BJ (cell line): ENCODE measurements at regions of chr11 and their contacts with region 1.

Region 1: GRCh38 chr11:46048198-46048597 is 73.1 kb downstream of the PHF21A start:
- DNase-seq: no peak
- H3K4me3 ChIP-seq: no peak overlapping the region
- H3K27me3 ChIP-seq: no peaks in the 10 kb centered on the region
- CTCF ChIP-seq: no peak

Region 2: DNA sequence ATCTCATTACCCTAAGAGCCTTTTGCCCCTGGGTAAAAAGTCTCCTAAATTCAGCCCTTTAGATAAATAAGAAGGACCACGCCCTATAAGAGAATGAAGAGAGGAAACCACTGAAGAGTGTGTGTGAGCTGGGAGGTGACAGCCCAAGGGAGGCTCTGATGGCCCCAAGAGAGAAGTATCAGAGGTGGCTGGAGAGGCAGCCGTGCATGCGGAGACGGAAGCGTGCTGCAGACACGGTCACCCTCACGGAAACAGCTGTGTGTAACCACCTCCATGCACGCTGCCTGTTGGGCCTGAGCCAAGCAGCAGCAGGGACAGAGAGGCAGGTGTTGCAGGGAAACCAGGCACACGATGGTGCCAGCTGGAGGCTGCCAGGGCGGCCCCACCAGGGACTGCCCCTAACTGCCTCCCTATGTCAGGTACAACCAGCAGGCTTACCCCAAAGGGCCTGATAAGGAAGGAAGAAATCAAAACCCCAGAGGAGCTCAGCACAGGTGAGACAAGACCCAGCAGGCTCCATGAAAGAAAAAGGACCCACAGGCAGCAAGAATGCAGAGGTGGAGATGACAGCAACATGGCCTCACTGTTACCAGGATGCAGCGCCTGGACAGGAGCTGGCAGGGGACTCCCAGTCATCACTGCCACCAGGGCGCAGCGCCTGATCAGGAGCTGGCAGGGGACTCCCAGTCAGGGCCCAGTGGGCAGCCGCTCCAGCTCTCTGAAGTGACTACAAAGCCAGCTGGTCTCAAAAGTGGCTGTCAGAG is 118.0 kb before region 1 on chr11:
- CTCF ChIA-PET with region 1: no interaction called
- POLR2A ChIA-PET with region 1: interaction called, 13 read pairs
- DNase-seq: no peak
- H3K4me3 ChIP-seq: no peak overlapping the region
- H3K27me3 ChIP-seq: peaks cover 3% of the 10 kb centered on the region; the same call in 1 of the 2 replicates
- CTCF ChIP-seq: no peak